Pancreas (tissue), 10 donors: ENCODE measurements at regions of chr5 and their contacts with region 1.

Region 1: DNA sequence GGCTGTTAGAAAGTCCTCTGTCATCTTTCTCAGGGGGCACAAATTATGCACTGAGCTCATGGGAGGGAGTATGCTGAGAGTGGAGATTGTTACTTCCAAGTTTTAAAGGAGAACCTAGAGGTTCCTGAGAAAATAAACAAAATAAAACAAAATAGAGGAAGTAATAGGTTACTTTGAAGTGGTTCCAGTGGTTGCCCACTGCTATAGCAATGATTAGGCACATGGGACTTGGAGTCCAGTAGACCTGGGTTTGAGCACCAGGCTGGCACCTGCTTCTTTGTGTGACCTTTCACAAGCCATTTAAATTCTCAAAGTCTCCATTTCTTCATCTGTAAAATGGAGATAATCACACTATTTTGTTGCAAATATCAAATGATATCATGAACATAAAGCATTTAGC is 13.8 kb upstream of the CDC23 start:
- DNase-seq: no peak
- ATAC-seq: no peak
- H3K4me3 ChIP-seq: no peak overlapping the region
- H3K27ac ChIP-seq: no peak overlapping the region
- H3K4me1 ChIP-seq: peaks cover 0 to 13% (median 5%) of the 10 kb centered on the region in 3 donors
- H3K27me3 ChIP-seq: no peaks in the 10 kb centered on the region
- CTCF ChIP-seq: no peak

Region 2: DNA sequence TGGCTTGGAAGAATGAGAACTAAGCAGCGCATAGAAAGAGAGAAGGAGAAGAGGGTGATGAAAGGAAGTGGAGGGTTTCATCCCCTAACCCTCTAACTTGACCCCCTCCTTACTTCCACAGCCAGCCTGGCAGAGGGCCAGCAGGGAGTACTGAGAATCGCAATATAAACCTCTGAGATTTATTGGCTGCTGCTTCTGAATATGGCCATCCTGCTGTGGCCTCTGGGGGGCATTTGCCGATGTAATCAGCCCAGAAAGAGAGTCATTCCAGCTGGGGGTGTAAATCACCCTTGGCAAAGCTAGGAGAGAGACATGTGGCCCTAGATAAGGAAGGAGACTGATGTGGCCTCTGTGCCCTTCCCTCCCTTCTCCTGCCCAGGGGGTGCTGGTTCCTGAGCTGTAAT is 48.5 kb after region 1 on chr5:
- intact Hi-C with region 1: loop called in 2 of 3 experiments (anchors 5 to 10 kb)
- DNase-seq: peak in 3 of 6 donors; percentile 11 to 63 (median 43)
- ATAC-seq: peak in 3 of 4 donors; percentile 12 to 28 (median 19)
- H3K4me3 ChIP-seq: no peak overlapping the region
- H3K27ac ChIP-seq: no peak overlapping the region
- H3K4me1 ChIP-seq: peaks cover 0 to 13% (median 0%) of the 10 kb centered on the region in 3 donors
- H3K27me3 ChIP-seq: no peaks in the 10 kb centered on the region
- CTCF ChIP-seq: no peak

Region 3: GRCh38 chr5:138282920-138283742 is 56.2 kb after region 1 on chr5:
- intact Hi-C with region 1: loop called in 2 of 3 experiments (anchors 5 to 10 kb)
- DNase-seq: peak in 4 of 6 donors; percentile 24 to 62 (median 36)
- ATAC-seq: peak; percentile 84 to 98 (median 92)
- H3K4me3 ChIP-seq: no peak overlapping the region
- H3K27ac ChIP-seq: no peak overlapping the region
- H3K4me1 ChIP-seq: peaks cover 0 to 6% (median 0%) of the 10 kb centered on the region in 3 donors
- H3K27me3 ChIP-seq: no peaks in the 10 kb centered on the region
- CTCF ChIP-seq: peak in 3 of 4 donors; percentile 23 to 31 (median 27)

Region 4: GRCh38 chr5:138418444-138418843 is 191.5 kb after region 1 on chr5:
- intact Hi-C with region 1: loop called in 1 of 3 experiments (anchors 10 kb)
- DNase-seq: no peak
- ATAC-seq: no peak
- H3K4me3 ChIP-seq: no peak overlapping the region
- H3K27ac ChIP-seq: no peak overlapping the region
- H3K4me1 ChIP-seq: no peaks in the 10 kb centered on the region
- H3K27me3 ChIP-seq: no peaks in the 10 kb centered on the region
- CTCF ChIP-seq: no peak